ENCODE measurements at regions of chr18 and their contacts with region 1.

Region 1: GRCh38 chr18:70454704-70455322 is 166.0 kb downstream of the SOCS6 start:
- DNase-seq: no peak
- ATAC-seq: no peak

Region 2: DNA sequence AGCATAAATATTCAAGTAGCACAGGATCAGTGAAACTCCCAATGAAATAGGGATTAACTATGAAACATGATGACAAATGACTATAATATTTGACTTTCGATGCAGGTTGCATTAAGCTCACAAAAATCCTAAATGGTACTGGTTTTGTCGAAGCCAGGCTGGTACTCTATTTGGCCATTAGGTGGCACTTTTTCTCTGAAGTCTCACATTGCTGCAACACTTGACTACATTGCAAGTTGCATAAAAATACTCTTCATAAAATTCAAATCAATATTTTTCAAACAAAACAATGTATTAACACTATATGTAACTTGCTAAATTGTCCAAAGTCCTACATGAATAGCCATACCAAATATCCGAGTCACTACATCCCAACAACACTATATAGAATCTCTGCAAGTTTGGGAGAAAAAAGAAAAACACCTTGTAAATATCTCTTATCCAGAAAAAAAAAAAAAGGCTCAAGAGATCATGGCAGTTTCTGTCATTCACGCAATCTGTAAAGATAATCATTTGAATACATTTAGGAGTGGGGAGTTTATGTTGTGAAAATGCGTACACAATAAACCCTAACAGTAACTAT is 258.9 kb before region 1 on chr18:
- intact Hi-C with region 1: loop called (anchors 5 kb)
- DNase-seq: no peak
- ATAC-seq: peak; percentile 64

Region 3: GRCh38 chr18:70499218-70499691 is 44.4 kb after region 1 on chr18:
- intact Hi-C with region 1: no loop called
- DNase-seq: no peak
- ATAC-seq: no peak